Testis (tissue), 5 donors: ENCODE measurements at regions of chr17 and their contacts with region 1.

Region 1: DNA sequence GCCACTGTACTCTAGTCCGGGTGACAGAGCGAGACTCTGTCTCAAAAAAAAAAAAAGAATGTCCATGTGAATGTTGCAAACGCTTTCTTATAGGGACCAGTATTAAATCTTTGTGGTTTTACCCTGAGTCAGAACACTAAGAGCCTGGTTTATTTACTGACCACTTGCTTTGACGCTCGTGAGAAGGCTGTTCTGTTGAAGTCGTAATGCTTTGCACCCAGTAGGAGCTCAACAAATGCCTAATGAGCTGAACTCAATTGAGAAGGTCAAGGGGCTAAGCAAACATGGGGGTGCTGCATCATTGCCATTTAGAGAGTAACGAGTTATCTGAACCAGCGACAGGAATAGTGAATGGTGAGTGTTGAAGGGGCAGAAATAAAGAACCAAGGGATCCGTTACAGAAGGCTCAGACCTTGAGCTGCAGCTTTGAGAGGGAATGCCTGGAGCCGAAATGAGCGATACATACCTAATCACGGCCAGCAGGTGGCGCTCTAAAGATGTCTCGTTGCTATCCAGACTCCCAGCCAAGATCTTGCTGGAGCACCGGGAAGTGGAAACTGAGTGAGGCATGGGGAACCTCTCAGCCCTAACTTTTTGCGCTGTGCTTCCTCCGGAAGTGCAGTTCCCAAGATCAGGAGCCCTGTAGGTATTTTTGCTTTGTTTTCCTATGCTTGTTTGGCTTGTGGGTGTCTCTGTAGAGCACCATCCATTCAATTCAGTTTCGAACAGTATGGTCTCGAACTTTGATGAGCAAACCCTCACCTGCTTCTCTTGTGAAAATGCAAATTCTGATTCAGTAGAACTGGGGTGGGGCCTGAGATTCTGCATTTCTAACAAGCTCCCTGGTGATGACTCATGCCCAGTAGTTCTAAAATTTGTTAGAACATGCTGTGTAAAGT is 12.6 kb upstream of the RNF222 start:
- DNase-seq: peak; percentile 93
- H3K4me3 ChIP-seq: no peak overlapping the region
- H3K27ac ChIP-seq: no peak overlapping the region
- H3K4me1 ChIP-seq: no peaks in the 10 kb centered on the region
- H3K27me3 ChIP-seq: no peaks in the 10 kb centered on the region
- CTCF ChIP-seq: peak; percentile 76 to 92 (median 92)
- POLR2A ChIP-seq: no peak

Region 2: DNA sequence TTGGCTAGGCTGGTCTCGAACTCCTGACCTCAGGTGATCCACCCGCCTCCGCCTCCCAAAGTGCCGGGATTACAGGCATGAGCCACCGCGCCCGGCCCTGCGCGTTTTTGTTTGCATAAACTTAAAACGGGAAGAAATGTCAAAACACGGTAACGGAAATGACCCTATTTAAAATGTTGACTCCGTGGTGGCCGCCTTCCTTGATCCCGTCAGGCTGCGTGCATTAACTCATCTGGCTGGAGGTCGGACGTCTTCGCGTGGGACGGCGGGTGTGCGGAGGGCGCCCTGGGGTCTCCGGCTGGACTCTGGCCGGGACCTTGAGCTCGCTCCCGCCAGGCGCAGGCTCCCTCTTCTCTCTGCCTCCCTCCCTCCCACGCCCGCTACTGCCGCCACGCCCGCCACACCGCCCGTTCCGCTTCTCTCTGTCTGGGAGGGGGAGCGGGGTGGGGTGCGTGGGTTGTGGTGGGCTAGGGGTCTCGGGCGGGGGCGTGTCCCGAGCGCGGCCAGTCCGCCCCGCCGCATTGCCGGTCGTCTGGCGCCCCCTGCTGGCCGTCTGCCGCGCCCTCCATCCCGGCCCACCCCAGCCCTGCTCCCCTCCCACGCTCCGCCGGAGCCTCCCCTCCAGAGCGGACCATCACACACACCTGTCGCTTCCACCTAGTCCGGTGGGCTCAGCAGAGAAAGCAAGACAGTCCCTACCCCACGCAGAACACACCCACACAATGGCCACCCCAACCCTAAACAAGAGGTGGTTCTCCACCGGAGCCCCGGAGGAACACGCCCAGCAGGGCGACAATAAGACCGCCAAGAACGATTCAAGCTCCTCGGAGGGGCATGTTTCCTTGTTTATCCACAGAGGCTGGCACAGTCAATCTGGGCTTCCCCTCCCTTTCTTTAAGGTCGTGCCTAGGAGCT is 335.6 kb after region 1 on chr17:
- intact Hi-C with region 1: loop called (anchors 10 kb)
- DNase-seq: peak; percentile 81
- H3K4me3 ChIP-seq: peak overlapping the region; percentile 58 to 78
- H3K27ac ChIP-seq: peak overlapping the region; percentile 16 to 39
- H3K4me1 ChIP-seq: peaks cover 5% of the 10 kb centered on the region
- H3K27me3 ChIP-seq: no peaks in the 10 kb centered on the region
- CTCF ChIP-seq: peak; percentile 75 to 98 (median 76)
- POLR2A ChIP-seq: no peak